ENCODE measurements at regions of chr15 and their contacts with region 1.

Region 1: GRCh38 chr15:74373731-74374647 is 6.5 kb upstream of the CYP11A1 start:
- DNase-seq: peak; percentile 91 to 96
- ATAC-seq: peak; percentile 94 to 97 (median 96)
- H3K4me3 ChIP-seq: peak overlapping the region; percentile 81
- H3K4me3 Mint-ChIP-seq: peak overlapping the region; percentile 78
- H3K27ac ChIP-seq: peak overlapping the region; percentile 48
- H3K27ac Mint-ChIP-seq: peak overlapping the region; percentile 35 to 68
- H3K4me1 ChIP-seq: peaks cover 20% of the 10 kb centered on the region
- H3K4me1 Mint-ChIP-seq: peaks cover 12 to 22% of the 10 kb centered on the region in 2 donors
- H3K27me3 ChIP-seq: no peaks in the 10 kb centered on the region
- H3K27me3 Mint-ChIP-seq: peaks cover 7 to 13% of the 10 kb centered on the region in 2 donors
- CTCF ChIP-seq: peak; percentile 94

Region 2: DNA sequence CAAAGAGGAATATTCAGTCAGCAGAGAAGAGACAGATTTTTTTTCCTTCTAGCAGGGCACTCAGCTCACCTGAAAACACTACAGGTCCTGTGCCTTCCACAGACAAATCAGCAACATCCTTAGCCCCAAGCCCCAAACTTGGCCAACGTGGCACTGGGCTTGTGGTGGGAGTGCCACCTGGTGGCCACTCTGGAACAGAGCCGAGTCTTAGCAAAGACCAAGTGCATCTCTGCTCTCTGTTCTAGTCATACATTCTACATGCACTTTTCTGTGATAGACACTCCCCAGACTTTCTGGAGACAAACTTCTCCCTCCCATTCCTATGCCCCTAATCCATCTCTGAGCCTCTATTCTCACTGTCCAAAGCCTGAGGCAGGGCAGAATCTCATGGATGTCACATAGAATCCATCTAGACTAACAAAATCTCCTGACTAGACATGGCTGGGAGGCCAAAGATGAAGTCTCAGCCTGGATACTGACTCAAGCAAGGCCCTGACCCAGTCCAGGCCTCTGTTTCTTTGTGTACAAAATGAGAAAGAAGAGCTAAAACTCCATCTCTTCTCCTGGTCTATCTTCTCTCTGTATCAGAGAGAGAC is 64.8 kb after region 1 on chr15:
- intact Hi-C with region 1: loop called (anchors 1 kb)
- DNase-seq: peak; percentile 66 to 89
- ATAC-seq: peak; percentile 63 to 76 (median 75)
- H3K4me3 ChIP-seq: no peak overlapping the region
- H3K4me3 Mint-ChIP-seq: no peak overlapping the region
- H3K27ac ChIP-seq: no peak overlapping the region
- H3K27ac Mint-ChIP-seq: no peak overlapping the region
- H3K4me1 ChIP-seq: peaks cover 18% of the 10 kb centered on the region
- H3K4me1 Mint-ChIP-seq: peaks cover 0 to 20% of the 10 kb centered on the region in 2 donors
- H3K27me3 ChIP-seq: no peaks in the 10 kb centered on the region
- H3K27me3 Mint-ChIP-seq: no peaks in the 10 kb centered on the region
- CTCF ChIP-seq: peak; percentile 95

Region 3: DNA sequence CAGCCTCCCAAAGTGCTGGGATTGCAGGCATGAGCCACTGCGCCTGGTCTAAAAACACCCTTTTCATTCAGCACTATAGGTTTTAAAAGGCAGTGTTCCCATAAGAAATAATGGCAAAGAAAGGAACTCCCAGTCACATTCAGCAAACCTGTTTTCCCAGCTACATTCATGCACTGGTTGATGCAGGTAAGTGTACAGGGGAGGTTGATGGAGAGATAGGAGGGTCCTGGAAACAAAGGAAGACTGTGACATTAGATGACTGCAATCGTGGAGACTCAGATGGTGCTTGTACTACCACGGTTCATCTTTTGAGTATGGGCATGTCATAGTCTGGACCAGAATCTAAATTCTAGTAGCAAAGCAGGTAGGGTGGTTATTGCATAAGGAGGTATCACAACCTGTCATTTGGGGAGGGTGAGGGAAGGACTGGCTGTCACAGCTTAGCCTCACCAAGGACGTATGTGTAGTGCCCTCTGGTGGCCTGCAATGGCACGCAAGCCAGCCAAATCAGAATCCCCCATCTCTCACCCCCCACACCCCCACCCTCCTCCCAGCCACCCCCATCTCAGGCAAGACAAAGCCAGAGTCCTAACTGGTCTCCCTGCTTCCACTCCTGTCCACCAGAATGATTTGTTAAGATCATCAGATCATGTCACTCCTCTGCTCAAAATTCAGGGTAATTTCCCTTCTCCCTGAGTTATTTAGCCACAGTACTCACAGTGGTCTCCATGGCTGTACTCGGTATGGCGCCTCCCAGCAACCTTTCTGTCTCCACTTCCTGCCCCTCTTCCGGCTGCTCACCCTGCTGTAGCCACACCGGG is 115.7 kb after region 1 on chr15:
- intact Hi-C with region 1: loop called (anchors 1 kb)
- DNase-seq: peak; percentile 59 to 87
- ATAC-seq: peak; percentile 86 to 94 (median 93)
- H3K4me3 ChIP-seq: no peak overlapping the region
- H3K4me3 Mint-ChIP-seq: peak overlapping the region; percentile 43
- H3K27ac ChIP-seq: peak overlapping the region; percentile 22
- H3K27ac Mint-ChIP-seq: peak overlapping the region; percentile 41 to 78
- H3K4me1 ChIP-seq: peaks cover 20% of the 10 kb centered on the region
- H3K4me1 Mint-ChIP-seq: peaks cover 14% of the 10 kb centered on the region in 2 donors
- H3K27me3 ChIP-seq: no peaks in the 10 kb centered on the region
- H3K27me3 Mint-ChIP-seq: no peaks in the 10 kb centered on the region
- CTCF ChIP-seq: peak; percentile 76

Region 4: GRCh38 chr15:74768771-74769342 is 394.9 kb after region 1 on chr15:
- intact Hi-C with region 1: loop called (anchors 2 kb)
- DNase-seq: peak; percentile 53 to 80
- ATAC-seq: peak; percentile 60 to 68 (median 65)
- H3K4me3 ChIP-seq: no peak overlapping the region
- H3K4me3 Mint-ChIP-seq: no peak overlapping the region
- H3K27ac ChIP-seq: no peak overlapping the region
- H3K27ac Mint-ChIP-seq: peak overlapping the region in 1 of 2 donors; percentile 35
- H3K4me1 ChIP-seq: peaks cover 26% of the 10 kb centered on the region
- H3K4me1 Mint-ChIP-seq: peaks cover 6 to 11% of the 10 kb centered on the region in 2 donors
- H3K27me3 ChIP-seq: no peaks in the 10 kb centered on the region
- H3K27me3 Mint-ChIP-seq: peaks cover 7 to 11% of the 10 kb centered on the region in 2 donors
- CTCF ChIP-seq: peak; percentile 82

Region 5: GRCh38 chr15:74950078-74951000 is 576.4 kb after region 1 on chr15:
- intact Hi-C with region 1: loop called (anchors 5 kb)
- DNase-seq: peak; percentile 69 to 90
- ATAC-seq: peak; percentile 88 to 99 (median 97)
- H3K4me3 ChIP-seq: no peak overlapping the region
- H3K4me3 Mint-ChIP-seq: no peak overlapping the region
- H3K27ac ChIP-seq: no peak overlapping the region
- H3K27ac Mint-ChIP-seq: no peak overlapping the region
- H3K4me1 ChIP-seq: no peaks in the 10 kb centered on the region
- H3K4me1 Mint-ChIP-seq: peaks cover 0 to 4% of the 10 kb centered on the region in 2 donors
- H3K27me3 ChIP-seq: no peaks in the 10 kb centered on the region
- H3K27me3 Mint-ChIP-seq: peaks cover 0 to 4% of the 10 kb centered on the region in 2 donors
- CTCF ChIP-seq: peak; percentile 91